OCI-LY7 (cell line): ENCODE measurements at regions of chr1 and their contacts with region 1.

Region 1: GRCh38 chr1:218254296-218254946 is 30.7 kb upstream of the RRP15 start:
- DNase-seq: no peak
- H3K4me3 ChIP-seq: no peak overlapping the region
- H3K27ac ChIP-seq: no peak overlapping the region
- H3K4me1 ChIP-seq: no peaks in the 10 kb centered on the region
- CTCF ChIP-seq: no peak

Region 2: DNA sequence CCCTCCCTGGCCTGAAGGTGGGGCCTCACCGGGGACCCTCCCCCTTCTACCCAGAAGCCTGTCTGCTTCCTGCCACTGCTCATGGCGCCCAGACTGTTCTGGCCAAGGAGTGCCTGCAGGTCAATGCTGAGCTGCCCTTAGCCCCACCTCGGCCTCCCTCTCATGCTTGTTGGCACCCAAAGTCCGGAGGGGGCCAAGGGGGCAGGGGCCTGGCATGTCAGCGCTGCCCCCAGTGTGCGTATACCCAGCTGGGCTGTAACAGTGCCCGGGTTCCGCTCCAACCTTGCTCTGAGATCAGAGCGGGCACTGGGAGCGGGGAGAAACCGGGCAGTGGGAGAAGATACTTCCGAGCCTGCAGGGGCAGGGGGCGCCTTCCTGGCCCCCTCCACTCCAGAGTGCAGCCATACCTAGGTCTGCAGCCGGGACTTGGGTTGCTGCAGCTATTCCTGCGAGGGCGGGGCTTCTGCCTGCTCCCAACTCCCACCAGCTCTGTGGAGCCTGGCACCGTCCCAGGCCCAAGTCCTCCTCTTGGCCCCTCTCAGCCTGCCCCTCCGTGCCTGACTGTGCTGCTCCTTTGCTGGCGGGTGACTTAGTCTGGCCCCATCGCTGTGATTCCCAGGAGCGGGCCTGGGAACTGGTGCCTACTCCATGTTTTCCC is 69.3 kb after region 1 on chr1:
- CTCF ChIA-PET with region 1: no interaction called
- POLR2A ChIA-PET with region 1: interaction called, 11 read pairs
- intact Hi-C with region 1: no loop called
- DNase-seq: no peak
- H3K4me3 ChIP-seq: no peak overlapping the region
- H3K27ac ChIP-seq: no peak overlapping the region
- H3K4me1 ChIP-seq: no peaks in the 10 kb centered on the region
- CTCF ChIP-seq: no peak

Region 3: GRCh38 chr1:218395916-218396315 is 141.5 kb after region 1 on chr1:
- CTCF ChIA-PET with region 1: no interaction called
- POLR2A ChIA-PET with region 1: no interaction called
- intact Hi-C with region 1: no loop called
- DNase-seq: no peak
- H3K4me3 ChIP-seq: no peak overlapping the region
- H3K27ac ChIP-seq: no peak overlapping the region
- H3K4me1 ChIP-seq: no peaks in the 10 kb centered on the region
- CTCF ChIP-seq: no peak